Ovary (tissue), 10 donors: ENCODE measurements at regions of chr11 and their contacts with region 1.

Region 1: DNA sequence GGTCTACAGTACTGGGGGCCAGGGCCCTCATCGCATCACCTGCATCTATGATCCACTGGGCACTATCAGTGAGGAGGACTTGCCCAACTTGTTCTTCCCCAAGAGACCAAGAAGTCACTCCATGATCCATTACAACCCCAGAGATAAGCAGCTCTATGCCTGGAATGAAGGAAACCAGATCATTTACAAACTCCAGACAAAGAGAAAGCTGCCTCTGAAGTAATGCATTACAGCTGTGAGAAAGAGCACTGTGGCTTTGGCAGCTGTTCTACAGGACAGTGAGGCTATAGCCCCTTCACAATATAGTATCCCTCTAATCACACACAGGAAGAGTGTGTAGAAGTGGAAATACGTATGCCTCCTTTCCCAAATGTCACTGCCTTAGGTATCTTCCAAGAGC is 3.8 kb upstream of the PPFIBP2 start:
- DNase-seq: no peak
- H3K4me3 ChIP-seq: no peak overlapping the region
- H3K27ac ChIP-seq: no peak overlapping the region
- H3K4me1 ChIP-seq: peaks cover 7% of the 10 kb centered on the region
- H3K27me3 ChIP-seq: no peaks in the 10 kb centered on the region
- CTCF ChIP-seq: no peak
- EP300 ChIP-seq: no peak
- POLR2A ChIP-seq: no peak

Region 2: GRCh38 chr11:7545611-7546010 is 35.6 kb after region 1 on chr11:
- intact Hi-C with region 1: loop called in 1 of 4 experiments (anchors 1 kb)
- DNase-seq: no peak
- H3K4me3 ChIP-seq: no peak overlapping the region
- H3K27ac ChIP-seq: no peak overlapping the region
- H3K4me1 ChIP-seq: no peaks in the 10 kb centered on the region
- H3K27me3 ChIP-seq: no peaks in the 10 kb centered on the region
- CTCF ChIP-seq: no peak
- EP300 ChIP-seq: no peak
- POLR2A ChIP-seq: no peak

Region 3: DNA sequence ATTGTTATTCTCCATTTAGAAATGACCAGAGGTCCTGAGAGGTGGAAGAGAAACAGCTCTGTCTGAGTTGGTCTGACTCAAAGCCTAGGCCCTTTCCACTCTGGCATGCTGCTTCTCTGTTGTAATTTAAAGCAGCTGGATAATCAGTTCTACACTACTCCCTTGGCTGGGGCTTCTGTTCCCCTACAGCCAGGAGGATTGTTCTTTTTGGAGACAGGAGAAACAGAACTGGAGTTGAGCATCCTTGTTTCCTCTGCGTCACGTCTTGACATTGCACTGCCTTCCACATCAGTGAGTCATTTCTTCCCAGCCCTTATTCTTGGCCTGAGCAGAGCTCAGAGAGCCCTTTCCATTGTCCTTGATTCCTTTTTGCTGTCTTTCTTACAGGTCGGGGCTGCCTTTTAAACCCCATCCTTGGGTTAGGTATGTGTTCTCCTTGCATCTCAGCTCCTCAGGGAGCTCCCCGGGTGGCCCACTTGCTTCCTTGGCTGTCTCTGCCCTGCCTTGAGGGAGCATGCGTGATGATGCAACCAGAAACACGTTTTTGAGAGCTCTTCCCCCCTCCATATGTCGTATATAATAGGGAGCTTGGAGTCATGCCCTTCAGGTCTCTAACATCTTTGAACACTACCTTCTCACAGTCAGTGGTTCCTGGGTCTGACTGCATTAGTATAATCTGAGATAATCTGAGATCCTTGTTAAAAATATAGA is 127.6 kb after region 1 on chr11:
- intact Hi-C with region 1: no loop called
- DNase-seq: peak in 1 of 5 donors; percentile 70
- H3K4me3 ChIP-seq: no peak overlapping the region
- H3K27ac ChIP-seq: peak overlapping the region in 1 of 2 donors; percentile 23
- H3K4me1 ChIP-seq: no peaks in the 10 kb centered on the region
- H3K27me3 ChIP-seq: no peaks in the 10 kb centered on the region
- CTCF ChIP-seq: no peak
- EP300 ChIP-seq: no peak
- POLR2A ChIP-seq: no peak